ENCODE measurements at regions of chr7 and their contacts with region 1.

Region 1: GRCh38 chr7:55515569-55516279 is 56.6 kb downstream of the VOPP1 start:
- DNase-seq: no peak
- ATAC-seq: peak; percentile 51
- H3K4me3 ChIP-seq: peak overlapping the region; percentile 56; the same call in 1 of the 2 replicates
- H3K27ac ChIP-seq: peak overlapping the region; percentile 62
- H3K4me1 ChIP-seq: peaks cover 69% of the 10 kb centered on the region
- H3K27me3 ChIP-seq: no peaks in the 10 kb centered on the region
- CTCF ChIP-seq: no peak
- EP300 ChIP-seq: 0 out of 4 replicates have a peak, but pooled peaks of 1 of the 2 experiments have one; percentile 16
- POLR2A ChIP-seq: peak; percentile 60
- RAD21 ChIP-seq: no peak

Region 2: GRCh38 chr7:55432939-55433784 is 82.6 kb before region 1 on chr7:
- CTCF ChIA-PET with region 1: interaction called, 10 read pairs
- POLR2A ChIA-PET with region 1: no interaction called
- RAD21 ChIA-PET with region 1: interaction called, 3 read pairs
- SMC1A ChIA-PET with region 1: no interaction called
- in situ Hi-C with region 1: no loop called
- intact Hi-C with region 1: loop called (anchors 5 kb)
- DNase-seq: no peak
- ATAC-seq: peak; percentile 85
- H3K4me3 ChIP-seq: no peak overlapping the region
- H3K27ac ChIP-seq: no peak overlapping the region
- H3K4me1 ChIP-seq: no peaks in the 10 kb centered on the region
- H3K27me3 ChIP-seq: no peaks in the 10 kb centered on the region
- CTCF ChIP-seq: peak; percentile 58 to 74 (median 61); a peak in 5 of 6 replicates
- EP300 ChIP-seq: no peak
- POLR2A ChIP-seq: no peak
- RAD21 ChIP-seq: peak; percentile 71

Region 3: GRCh38 chr7:55526770-55527169 is 11.0 kb after region 1 on chr7:
- CTCF ChIA-PET with region 1: interaction called, 67 read pairs
- POLR2A ChIA-PET with region 1: interaction called, 122 read pairs
- RAD21 ChIA-PET with region 1: interaction called, 150 read pairs
- SMC1A ChIA-PET with region 1: interaction called, 354 read pairs
- in situ Hi-C with region 1: no loop called
- intact Hi-C with region 1: no loop called
- DNase-seq: no peak
- ATAC-seq: peak; percentile 75
- H3K4me3 ChIP-seq: no peak overlapping the region
- H3K27ac ChIP-seq: peak overlapping the region; percentile 62
- H3K4me1 ChIP-seq: peaks cover 66% of the 10 kb centered on the region
- H3K27me3 ChIP-seq: no peaks in the 10 kb centered on the region
- CTCF ChIP-seq: no peak
- EP300 ChIP-seq: no peak; a peak in 1 of 4 replicates
- POLR2A ChIP-seq: no peak
- RAD21 ChIP-seq: no peak

Region 4: GRCh38 chr7:55546829-55547228 is 31.1 kb after region 1 on chr7:
- CTCF ChIA-PET with region 1: interaction called, 8 read pairs
- POLR2A ChIA-PET with region 1: interaction called, 8 read pairs
- RAD21 ChIA-PET with region 1: interaction called, 24 read pairs
- SMC1A ChIA-PET with region 1: interaction called, 38 read pairs
- in situ Hi-C with region 1: no loop called
- intact Hi-C with region 1: no loop called
- DNase-seq: no peak
- ATAC-seq: peak; percentile 64
- H3K4me3 ChIP-seq: peak overlapping the region; percentile 22; the same call in 1 of the 2 replicates
- H3K27ac ChIP-seq: peak overlapping the region; percentile 82
- H3K4me1 ChIP-seq: peaks cover 72% of the 10 kb centered on the region
- H3K27me3 ChIP-seq: no peaks in the 10 kb centered on the region
- CTCF ChIP-seq: no peak
- EP300 ChIP-seq: no peak
- POLR2A ChIP-seq: no peak
- RAD21 ChIP-seq: no peak

Region 5: GRCh38 chr7:55552320-55553023 is 36.7 kb after region 1 on chr7:
- CTCF ChIA-PET with region 1: interaction called, 8 read pairs
- POLR2A ChIA-PET with region 1: interaction called, 8 read pairs
- RAD21 ChIA-PET with region 1: interaction called, 24 read pairs
- SMC1A ChIA-PET with region 1: interaction called, 38 read pairs
- in situ Hi-C with region 1: no loop called
- intact Hi-C with region 1: no loop called
- DNase-seq: no peak
- ATAC-seq: no peak
- H3K4me3 ChIP-seq: no peak overlapping the region
- H3K27ac ChIP-seq: no peak overlapping the region
- H3K4me1 ChIP-seq: peaks cover 94% of the 10 kb centered on the region
- H3K27me3 ChIP-seq: no peaks in the 10 kb centered on the region
- CTCF ChIP-seq: no peak
- EP300 ChIP-seq: no peak
- POLR2A ChIP-seq: no peak
- RAD21 ChIP-seq: no peak

Region 6: GRCh38 chr7:55557666-55558188 is 42.0 kb after region 1 on chr7:
- CTCF ChIA-PET with region 1: interaction called, 5 read pairs
- POLR2A ChIA-PET with region 1: interaction called, 7 read pairs
- RAD21 ChIA-PET with region 1: interaction called, 8 read pairs
- SMC1A ChIA-PET with region 1: interaction called, 11 read pairs
- in situ Hi-C with region 1: no loop called
- intact Hi-C with region 1: no loop called
- DNase-seq: peak; percentile 85
- ATAC-seq: peak; percentile 87
- H3K4me3 ChIP-seq: peak overlapping the region; percentile 70
- H3K27ac ChIP-seq: peak overlapping the region; percentile 57
- H3K4me1 ChIP-seq: peaks cover 82% of the 10 kb centered on the region
- H3K27me3 ChIP-seq: no peaks in the 10 kb centered on the region
- CTCF ChIP-seq: peak in 2 of 3 experiments; percentile 7 to 12; a peak in 1 of 6 replicates
- EP300 ChIP-seq: peak; percentile 32 to 54; a peak in 3 of 4 replicates
- POLR2A ChIP-seq: peak; percentile 57
- RAD21 ChIP-seq: no peak

Region 7: DNA sequence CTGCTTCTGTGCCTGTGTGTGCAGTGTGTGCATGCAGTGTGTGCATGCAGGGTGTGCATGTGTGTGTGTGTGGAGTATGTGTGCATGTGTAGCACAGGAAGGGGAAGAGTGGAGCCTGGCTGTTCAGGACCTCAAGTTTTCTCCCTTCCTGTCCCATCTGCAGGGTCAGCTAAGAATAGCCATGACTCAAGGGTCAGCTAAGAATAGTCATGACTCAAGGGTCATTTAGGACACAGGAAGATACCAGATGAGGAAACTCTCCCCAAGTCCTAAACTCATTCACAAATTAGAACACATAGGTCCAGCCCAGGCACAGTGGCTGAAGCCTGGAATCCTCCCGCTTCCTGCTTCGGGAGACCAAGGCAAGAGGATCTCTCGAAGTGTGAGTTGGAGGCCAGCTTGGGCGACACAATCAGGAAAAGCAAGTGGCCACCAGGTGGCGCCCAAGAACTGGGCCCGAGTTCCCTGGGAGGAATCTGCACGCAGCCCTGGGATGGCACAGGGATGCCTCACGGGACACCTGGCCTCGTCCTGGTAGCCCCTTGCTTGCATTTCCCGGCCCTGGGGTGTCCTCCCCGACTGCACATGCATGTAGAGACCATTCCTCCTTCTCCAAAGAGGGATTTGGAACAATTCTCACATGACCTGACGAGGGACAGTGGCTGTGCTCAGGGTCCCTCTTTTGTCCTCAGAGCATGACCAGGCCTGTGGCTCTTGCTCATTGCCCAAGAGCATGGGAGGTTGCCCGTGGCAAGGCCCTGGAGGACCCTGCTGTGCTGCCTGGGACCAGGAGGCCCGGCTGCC is 78.0 kb after region 1 on chr7:
- CTCF ChIA-PET with region 1: interaction called, 12 read pairs
- POLR2A ChIA-PET with region 1: no interaction called
- RAD21 ChIA-PET with region 1: interaction called, 3 read pairs
- SMC1A ChIA-PET with region 1: interaction called, 3 read pairs
- in situ Hi-C with region 1: no loop called
- intact Hi-C with region 1: no loop called
- DNase-seq: no peak
- ATAC-seq: peak; percentile 84
- H3K4me3 ChIP-seq: no peak overlapping the region
- H3K27ac ChIP-seq: no peak overlapping the region
- H3K4me1 ChIP-seq: peaks cover 9% of the 10 kb centered on the region; the same call in 1 of the 2 replicates
- H3K27me3 ChIP-seq: no peaks in the 10 kb centered on the region
- CTCF ChIP-seq: peak; percentile 73 to 94 (median 90)
- EP300 ChIP-seq: no peak
- POLR2A ChIP-seq: no peak
- RAD21 ChIP-seq: peak; percentile 54

Measured in GM12878 (cell line).